ENCODE measurements at regions of chr22 and their contacts with region 1.

Region 1: DNA sequence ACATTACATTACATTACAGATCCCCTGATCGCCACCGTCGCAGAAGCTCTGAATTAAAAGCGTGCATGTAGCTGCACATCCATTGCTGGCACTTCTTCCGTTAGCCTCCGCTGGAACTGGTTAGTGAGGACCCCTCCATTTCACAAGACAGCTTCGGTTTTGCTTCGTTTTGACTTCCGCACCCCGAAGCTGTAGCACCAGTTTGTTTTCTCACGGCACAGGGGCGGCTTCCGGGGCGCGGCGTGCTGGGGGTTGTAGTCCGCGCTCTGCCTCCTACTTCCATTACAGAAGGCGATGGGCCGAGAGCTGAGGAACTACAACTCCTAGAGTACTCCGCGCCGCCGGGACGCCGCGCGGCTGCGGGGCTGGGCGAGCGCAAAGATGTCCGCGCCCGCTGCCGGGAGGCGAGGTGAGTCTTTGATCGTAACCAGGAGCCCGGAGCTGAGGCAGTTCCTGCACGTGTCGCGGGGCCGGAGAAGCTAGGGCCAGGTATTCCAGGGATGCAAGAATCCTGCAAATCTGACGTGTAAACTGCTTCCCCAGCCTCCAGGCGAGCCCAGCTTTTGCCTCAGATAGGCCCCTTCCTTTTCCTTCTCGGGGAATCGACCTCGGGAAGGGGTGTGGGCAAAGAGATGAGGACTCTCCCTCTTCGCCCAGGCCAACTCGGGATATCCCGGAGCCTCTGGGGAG is at the start of gene PEX26:
- DNase-seq: peak; percentile 82 to 93
- ATAC-seq: peak; percentile 98 to 99
- H3K4me3 ChIP-seq: peak within 1 kb of the TSS; percentile 64
- H3K27ac ChIP-seq: peak within 1 kb of the TSS; percentile 90 to 97
- H3K4me1 ChIP-seq: peaks cover 24% of the 10 kb centered on the region
- CTCF ChIP-seq: no peak
- EP300 ChIP-seq: no peak
- POLR2A ChIP-seq: peak; percentile 38
- RAD21 ChIP-seq: no peak
- polyA plus RNA-seq, gene PEX26: 12.4 and 15.3 TPM in 2 replicates

Region 2: DNA sequence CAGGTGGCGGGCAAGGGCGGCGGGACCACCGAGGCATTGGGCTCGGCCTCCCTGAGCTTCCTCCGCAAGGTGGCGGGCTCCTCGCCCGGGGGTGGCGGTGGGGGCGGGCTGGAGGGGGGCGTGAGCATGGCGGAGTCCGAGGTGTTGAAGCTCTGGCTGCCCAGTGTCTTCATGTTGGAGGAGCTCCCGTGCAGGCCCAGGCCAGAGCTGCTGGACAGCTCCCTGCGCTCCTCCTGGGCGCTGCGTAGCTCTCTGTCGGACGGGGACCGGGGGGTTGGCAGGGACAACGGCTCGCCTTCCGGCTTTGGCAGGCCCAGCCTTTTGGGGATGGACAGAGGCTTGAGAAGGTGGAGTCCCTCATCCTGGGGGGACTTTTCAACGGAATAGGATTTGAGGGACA is 259.6 kb before region 1 on chr22:
- CTCF ChIA-PET with region 1: interaction called, 10 read pairs
- POLR2A ChIA-PET with region 1: no interaction called
- DNase-seq: no peak
- ATAC-seq: no peak
- H3K4me3 ChIP-seq: no peak overlapping the region
- H3K27ac ChIP-seq: no peak overlapping the region
- H3K4me1 ChIP-seq: no peaks in the 10 kb centered on the region
- CTCF ChIP-seq: no peak
- EP300 ChIP-seq: no peak
- POLR2A ChIP-seq: no peak
- RAD21 ChIP-seq: no peak

Region 3: DNA sequence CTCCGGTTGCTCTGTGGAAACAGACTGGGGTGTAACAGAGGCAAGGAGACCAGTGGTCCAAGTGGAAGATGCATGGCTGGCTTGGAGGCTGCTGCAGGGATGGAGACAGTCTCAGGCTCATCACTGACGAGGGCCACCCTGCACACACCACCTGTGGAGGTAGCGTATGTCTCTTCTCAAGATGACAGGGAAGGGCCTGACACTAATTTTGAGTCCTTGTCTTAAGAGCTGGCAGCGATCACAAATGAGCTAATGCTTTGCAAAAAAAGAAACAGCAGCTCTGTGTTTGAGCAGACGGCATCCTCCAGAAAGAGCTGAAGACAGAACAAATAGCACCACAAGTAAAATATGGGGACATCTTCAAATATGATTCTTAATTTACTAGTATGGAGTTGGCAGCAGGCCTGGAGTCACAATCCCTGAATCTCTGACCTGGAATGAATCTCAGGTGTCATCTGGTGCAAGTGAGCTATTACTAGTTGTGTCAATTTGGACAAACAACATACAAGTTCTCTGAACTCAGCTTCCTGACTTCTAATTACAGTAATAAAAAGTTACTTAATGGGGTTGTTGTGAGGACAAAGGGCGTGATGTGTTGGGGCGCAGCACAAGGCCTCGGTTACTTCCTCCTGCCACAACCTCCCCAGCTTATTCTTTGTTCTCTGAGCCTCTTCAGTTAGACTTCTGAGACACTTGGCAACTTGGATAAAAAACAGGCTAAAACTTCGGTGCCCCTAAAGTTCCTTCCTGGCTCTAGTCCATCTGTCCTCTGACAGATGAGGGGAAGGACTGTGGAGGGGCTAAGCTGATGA is 208.3 kb before region 1 on chr22:
- CTCF ChIA-PET with region 1: interaction called, 12 read pairs
- POLR2A ChIA-PET with region 1: no interaction called
- DNase-seq: no peak
- ATAC-seq: no peak
- H3K4me3 ChIP-seq: no peak overlapping the region
- H3K27ac ChIP-seq: no peak overlapping the region
- H3K4me1 ChIP-seq: no peaks in the 10 kb centered on the region
- CTCF ChIP-seq: no peak
- EP300 ChIP-seq: no peak
- POLR2A ChIP-seq: no peak
- RAD21 ChIP-seq: no peak

Region 4: DNA sequence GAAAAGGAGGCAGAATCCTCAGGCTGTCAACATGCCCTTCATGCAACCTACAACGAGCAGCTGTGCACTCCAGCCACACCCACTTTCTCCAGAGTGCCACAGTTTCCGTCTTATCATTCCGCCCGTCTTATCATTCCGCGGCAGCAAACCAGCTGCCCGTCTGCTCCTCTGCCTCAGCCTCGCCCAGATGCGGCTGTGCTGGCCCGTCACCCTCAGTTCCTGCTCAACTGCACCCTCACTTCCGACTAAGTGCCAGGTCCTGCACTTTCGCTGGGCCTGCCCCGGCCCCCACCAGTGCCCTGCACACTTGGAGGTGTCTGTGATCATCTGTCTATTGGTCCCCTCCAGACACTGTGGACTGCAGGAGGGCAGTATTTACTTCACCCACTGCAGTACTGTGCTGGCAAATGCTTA is 97.1 kb before region 1 on chr22:
- CTCF ChIA-PET with region 1: interaction called, 11 read pairs
- POLR2A ChIA-PET with region 1: no interaction called
- DNase-seq: no peak
- ATAC-seq: peak in 1 of 2 experiments; percentile 59; a peak in 3 of 6 replicates
- H3K4me3 ChIP-seq: no peak overlapping the region
- H3K27ac ChIP-seq: no peak overlapping the region; a peak in 1 of 6 replicates
- H3K4me1 ChIP-seq: peaks cover 21% of the 10 kb centered on the region
- CTCF ChIP-seq: no peak
- EP300 ChIP-seq: no peak
- POLR2A ChIP-seq: no peak
- RAD21 ChIP-seq: no peak

Region 5: GRCh38 chr22:18024276-18024947 is 53.4 kb before region 1 on chr22 and contains the start of gene MICAL3:
- CTCF ChIA-PET with region 1: interaction called, 57 read pairs
- POLR2A ChIA-PET with region 1: no interaction called
- DNase-seq: peak; percentile 57 to 61
- ATAC-seq: peak; percentile 89
- H3K4me3 ChIP-seq: peak within 1 kb of the TSS; percentile 76
- H3K27ac ChIP-seq: peak within 1 kb of the TSS; percentile 89 to 97
- H3K4me1 ChIP-seq: peaks cover 25% of the 10 kb centered on the region
- CTCF ChIP-seq: peak; percentile 63
- EP300 ChIP-seq: no peak
- POLR2A ChIP-seq: 0 out of 2 replicates have a peak, but pooled peaks have one; percentile 18
- RAD21 ChIP-seq: peak; percentile 28 to 62
- polyA plus RNA-seq, gene MICAL3: 18.7 and 20.5 TPM in 2 replicates

Region 6: DNA sequence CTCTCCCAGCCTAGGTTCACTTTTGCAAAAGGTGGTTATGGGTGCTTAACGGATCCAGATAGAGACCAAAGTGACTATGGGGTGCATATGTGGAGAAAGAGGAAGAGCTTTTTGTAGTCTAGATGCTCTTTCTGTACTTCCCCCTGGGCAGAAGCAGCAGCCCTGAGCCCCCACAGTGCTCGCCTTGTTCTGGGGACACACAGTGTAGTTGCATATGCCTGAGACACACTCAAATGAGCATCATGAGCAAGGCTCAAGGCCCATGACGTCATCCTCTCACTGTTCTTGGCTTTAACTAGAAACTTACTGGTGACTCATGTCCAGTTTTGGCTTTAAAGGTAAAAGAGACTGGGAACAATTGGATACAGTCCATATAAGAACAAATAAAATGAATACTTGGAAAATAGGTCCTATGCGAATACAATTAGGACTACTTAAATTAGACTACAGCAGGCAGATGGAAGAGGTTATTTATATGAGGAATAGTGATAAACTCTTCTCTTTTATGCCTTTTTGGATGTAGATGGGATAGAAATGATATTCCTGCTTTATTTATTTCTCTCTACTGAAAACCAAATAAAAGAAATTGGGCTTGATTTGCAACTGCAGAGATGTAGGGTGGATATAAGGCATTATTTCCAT is 20.1 kb before region 1 on chr22:
- CTCF ChIA-PET with region 1: interaction called, 38 read pairs
- POLR2A ChIA-PET with region 1: no interaction called
- DNase-seq: peak; percentile 60 to 85
- ATAC-seq: peak; percentile 68 to 79
- H3K4me3 ChIP-seq: no peak overlapping the region
- H3K27ac ChIP-seq: peak overlapping the region; percentile 92 to 95
- H3K4me1 ChIP-seq: peaks cover 71% of the 10 kb centered on the region
- CTCF ChIP-seq: no peak
- EP300 ChIP-seq: no peak
- POLR2A ChIP-seq: no peak
- RAD21 ChIP-seq: no peak

Measured in A549 (cell line).